ENCODE measurements at regions of chr3 and their contacts with region 1.

Region 1: DNA sequence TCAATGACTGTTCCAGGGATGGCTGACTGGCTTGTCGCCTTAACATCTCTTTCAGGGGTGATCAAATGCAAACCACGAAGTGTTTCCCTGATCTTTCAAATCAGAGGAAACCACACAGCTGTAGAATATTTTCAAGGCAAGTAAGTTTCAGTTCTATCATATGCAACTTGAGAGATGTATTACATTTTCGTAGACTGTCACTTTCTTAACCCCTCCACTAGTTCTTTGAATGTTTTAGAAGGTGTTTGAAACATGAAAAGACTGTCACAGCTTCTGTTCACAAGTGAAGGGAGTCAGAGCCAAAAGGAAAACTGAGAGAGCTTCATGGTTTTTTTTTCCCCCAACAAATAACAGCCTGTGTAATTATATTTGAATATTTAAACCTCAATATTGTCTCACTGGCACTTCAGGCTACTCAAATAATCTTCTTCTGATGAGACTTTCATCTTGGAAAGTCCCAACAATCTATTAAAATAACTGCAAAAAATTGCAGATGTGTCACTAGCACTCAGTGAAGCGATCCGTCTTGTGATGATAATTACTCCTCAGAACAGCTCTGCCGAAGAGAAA is 25.9 kb upstream of the CAPN7 start:
- DNase-seq: no peak
- H3K4me3 Mint-ChIP-seq: no peak overlapping the region
- H3K27ac Mint-ChIP-seq: no peak overlapping the region
- H3K4me1 Mint-ChIP-seq: peaks cover 9% of the 10 kb centered on the region
- H3K27me3 Mint-ChIP-seq: peaks cover 38% of the 10 kb centered on the region

Region 2: DNA sequence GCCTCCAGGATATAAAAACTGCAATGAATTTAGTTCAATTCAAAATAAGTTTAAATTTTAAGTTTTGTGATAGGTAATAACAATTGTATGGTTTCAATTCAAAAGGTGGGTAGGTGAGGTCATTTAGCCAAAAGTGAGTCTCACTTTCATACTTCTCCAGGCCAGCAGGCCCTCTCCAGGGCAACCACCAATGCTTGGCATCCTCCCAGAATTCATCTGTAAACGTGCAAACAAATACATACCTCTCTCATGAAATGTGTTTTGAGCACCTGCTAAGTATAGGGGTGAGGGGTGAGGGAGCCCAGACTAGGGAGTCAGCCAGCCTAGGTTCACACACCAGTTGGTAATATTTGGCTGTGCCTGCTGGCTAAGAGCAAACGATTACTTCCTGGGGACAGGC is 59.1 kb before region 1 on chr3:
- CTCF ChIA-PET with region 1: interaction called, 12 read pairs
- POLR2A ChIA-PET with region 1: no interaction called
- DNase-seq: no peak
- H3K4me3 Mint-ChIP-seq: no peak overlapping the region
- H3K27ac Mint-ChIP-seq: no peak overlapping the region
- H3K4me1 Mint-ChIP-seq: peaks cover 17% of the 10 kb centered on the region
- H3K27me3 Mint-ChIP-seq: peaks cover 3% of the 10 kb centered on the region